Left colon (tissue), 2 donors: ENCODE measurements at regions of chr14 and their contacts with region 1.

Region 1: GRCh38 chr14:49692811-49693734 is at the start of gene KLHDC1:
- DNase-seq: peak; percentile 82 to 88
- ATAC-seq: peak; percentile 76
- total RNA-seq, gene KLHDC1: 3.3 to 3.7 TPM

Region 2: GRCh38 chr14:49420201-49420600 is 272.9 kb before region 1 on chr14:
- intact Hi-C with region 1: no loop called
- DNase-seq: no peak
- ATAC-seq: no peak

Region 3: DNA sequence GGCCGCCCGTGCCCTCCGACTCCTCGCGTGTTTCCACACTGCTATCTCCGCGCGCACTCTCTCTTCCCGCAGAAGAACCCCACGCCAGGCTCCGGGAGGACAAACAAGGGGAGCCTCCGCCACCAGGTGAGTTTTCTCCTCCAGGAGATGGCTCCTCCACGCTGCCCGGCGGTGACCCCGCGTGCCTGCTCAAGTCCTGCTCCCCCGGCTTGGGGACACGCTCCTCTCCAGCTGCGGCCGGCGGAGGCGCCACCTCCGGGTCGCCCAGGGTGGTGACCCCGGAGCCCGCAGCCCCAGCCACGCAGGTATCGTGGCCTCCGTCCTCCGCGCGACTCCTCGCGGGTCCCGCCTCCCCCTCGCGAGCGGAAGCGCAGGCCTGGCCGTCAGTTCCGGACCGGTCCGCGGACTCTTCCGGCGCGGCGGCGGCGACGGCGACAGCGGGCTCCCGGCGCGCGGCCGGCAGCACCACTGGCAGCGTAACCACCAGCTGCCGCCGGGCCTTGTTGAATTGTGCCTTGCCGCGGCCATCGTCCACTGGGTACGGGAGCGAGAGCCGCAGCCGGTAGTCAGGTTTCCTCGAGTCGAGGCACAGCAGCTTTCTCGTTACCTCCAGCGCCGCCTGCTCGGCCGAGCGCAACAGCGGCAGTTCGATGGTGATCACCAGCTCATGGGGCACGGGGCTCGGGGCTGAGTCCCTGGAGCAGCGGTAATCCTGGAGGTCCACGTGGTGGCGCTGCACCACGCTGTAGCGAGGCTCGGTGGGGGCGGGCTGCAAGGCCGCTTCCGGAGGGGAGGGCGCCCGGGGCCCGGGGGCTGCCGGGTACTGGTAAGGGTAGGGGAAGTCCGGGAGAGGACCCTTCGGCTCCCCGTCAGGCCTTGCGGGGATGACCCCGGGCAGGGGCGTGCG is 59.2 kb before region 1 on chr14:
- intact Hi-C with region 1: loop called (anchors 10 kb)
- DNase-seq: peak; percentile 93 to 94
- ATAC-seq: peak; percentile 85

Region 4: DNA sequence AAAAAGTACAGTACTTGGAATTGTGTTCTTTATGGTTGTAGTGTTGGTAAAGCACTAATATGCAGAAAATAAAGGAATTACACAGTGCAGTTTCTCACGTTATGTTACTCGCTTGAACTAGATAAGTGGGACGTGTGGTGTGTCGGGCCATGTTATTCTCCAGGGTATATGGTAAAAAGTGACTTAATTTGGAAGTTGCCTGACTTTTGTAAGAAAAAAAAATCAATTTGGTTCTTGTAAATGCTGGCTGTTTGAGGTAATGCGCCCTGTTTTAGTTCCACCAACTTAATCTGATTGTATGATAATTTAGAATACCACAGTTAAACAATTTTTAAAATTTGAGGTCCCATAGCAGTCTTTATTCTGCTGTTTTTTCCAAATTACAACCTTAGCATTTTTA is 203.9 kb after region 1 on chr14:
- intact Hi-C with region 1: no loop called
- DNase-seq: no peak
- ATAC-seq: no peak